CD4-positive, alpha-beta memory T cell (primary cell): ENCODE measurements at regions of chr19 and their contacts with region 1.

Region 1: GRCh38 chr19:9621156-9622037 is at the start of gene ZNF561:
- DNase-seq: peak; percentile 89 to 92 (median 90)
- H3K4me3 ChIP-seq: peak within 1 kb of the TSS; percentile 87 to 94
- H3K4me3 Mint-ChIP-seq: peak within 1 kb of the TSS; percentile 96 to 100 (median 99)
- H3K27ac ChIP-seq: peak within 1 kb of the TSS; percentile 88
- H3K27ac Mint-ChIP-seq: peak within 1 kb of the TSS; percentile 100
- H3K4me1 ChIP-seq: peaks cover 21% of the 10 kb centered on the region
- H3K4me1 Mint-ChIP-seq: peaks cover 16 to 29% (median 22%) of the 10 kb centered on the region in 4 donors
- H3K27me3 ChIP-seq: no peaks in the 10 kb centered on the region
- H3K27me3 Mint-ChIP-seq: peaks cover 0 to 3% of the 10 kb centered on the region in 2 donors
- total RNA-seq, gene ZNF561: 67.2 to 75.8 TPM

Region 2: DNA sequence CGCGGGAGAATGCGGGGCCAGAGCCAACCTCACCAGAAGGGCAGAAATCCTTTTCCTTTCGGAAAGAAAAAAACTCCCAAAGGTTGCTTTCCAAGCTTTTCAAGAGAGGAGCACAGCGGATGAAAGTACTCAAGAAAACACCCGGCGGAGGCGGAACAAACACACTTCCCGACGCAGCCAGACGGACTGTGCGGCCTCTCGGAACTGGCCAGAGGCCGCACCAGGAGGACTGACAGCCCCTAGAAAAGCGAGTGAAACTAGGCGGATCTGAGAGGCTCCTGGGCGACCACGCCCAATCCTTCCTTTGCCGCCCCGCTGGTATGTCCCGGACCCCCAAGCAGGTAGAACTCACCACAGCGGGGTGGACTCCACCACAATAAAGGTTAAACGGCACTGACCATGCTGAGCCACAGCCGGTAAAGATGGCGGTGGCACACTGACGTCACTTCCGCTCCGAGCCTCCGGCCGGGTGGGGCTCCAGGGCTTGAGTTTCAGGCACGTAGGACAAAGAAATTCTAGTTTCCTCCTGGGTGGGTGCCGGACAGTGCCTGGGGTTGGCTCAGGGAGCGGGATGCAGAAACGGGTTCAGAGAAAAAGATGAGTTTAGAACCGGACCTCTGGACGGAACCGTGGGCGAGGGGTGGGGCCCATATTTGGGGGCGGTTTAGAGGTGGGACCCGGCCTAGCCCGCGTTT is 53.4 kb after region 1 on chr19 and contains the start of gene ZNF562:
- CTCF ChIA-PET with region 1: no interaction called
- POLR2A ChIA-PET with region 1: no interaction called
- intact Hi-C with region 1: loop called (anchors 2 kb)
- DNase-seq: peak; percentile 78 to 81 (median 80)
- H3K4me3 ChIP-seq: peak within 1 kb of the TSS; percentile 91 to 98
- H3K4me3 Mint-ChIP-seq: peak within 1 kb of the TSS; percentile 94 to 98 (median 96)
- H3K27ac ChIP-seq: peak within 1 kb of the TSS; percentile 75
- H3K27ac Mint-ChIP-seq: peak within 1 kb of the TSS; percentile 77 to 99 (median 98)
- H3K4me1 ChIP-seq: peaks cover 8% of the 10 kb centered on the region
- H3K4me1 Mint-ChIP-seq: peaks cover 12 to 27% (median 18%) of the 10 kb centered on the region in 4 donors
- H3K27me3 ChIP-seq: no peaks in the 10 kb centered on the region
- H3K27me3 Mint-ChIP-seq: no peaks in the 10 kb centered on the region
- total RNA-seq, gene ZNF562: 21.2 to 23.2 TPM